ENCODE measurements at regions of chr6 and their contacts with region 1.

Region 1: GRCh38 chr6:6515691-6516607 is 72.6 kb upstream of the LY86 start:
- DNase-seq: peak; percentile 38
- H3K4me3 Mint-ChIP-seq: no peak overlapping the region
- H3K27ac Mint-ChIP-seq: peak overlapping the region; percentile 21
- H3K4me1 Mint-ChIP-seq: peaks cover 18% of the 10 kb centered on the region
- H3K27me3 Mint-ChIP-seq: peaks cover 80% of the 10 kb centered on the region

Region 2: GRCh38 chr6:5989141-5989723 is 526.7 kb before region 1 on chr6:
- intact Hi-C with region 1: loop called (anchors 10 kb)
- DNase-seq: no peak
- H3K4me3 Mint-ChIP-seq: no peak overlapping the region
- H3K27ac Mint-ChIP-seq: no peak overlapping the region
- H3K4me1 Mint-ChIP-seq: peaks cover 41% of the 10 kb centered on the region
- H3K27me3 Mint-ChIP-seq: peaks cover 48% of the 10 kb centered on the region

Region 3: GRCh38 chr6:6643398-6643797 is 127.4 kb after region 1 on chr6:
- intact Hi-C with region 1: loop called (anchors 2 kb)
- DNase-seq: peak; percentile 31
- H3K4me3 Mint-ChIP-seq: no peak overlapping the region
- H3K27ac Mint-ChIP-seq: peak overlapping the region; percentile 58
- H3K4me1 Mint-ChIP-seq: peaks cover 26% of the 10 kb centered on the region
- H3K27me3 Mint-ChIP-seq: no peaks in the 10 kb centered on the region

Measured in activated T-helper 1 cell treated with anti-CD3 and anti-CD28 coated beads, Interleukin-12 subunit alpha, Interleukin-12 subunit beta, Interleukin-2, Interleukin-4 antibody, amounts not matched to agents 30 ng/mL and 10 ng/mL and 1 ng/mL, durations not matched to agents 14 hours and 24 hours and 36 hours (primary cell).